ENCODE measurements at regions of chr12 and their contacts with region 1.

Region 1: DNA sequence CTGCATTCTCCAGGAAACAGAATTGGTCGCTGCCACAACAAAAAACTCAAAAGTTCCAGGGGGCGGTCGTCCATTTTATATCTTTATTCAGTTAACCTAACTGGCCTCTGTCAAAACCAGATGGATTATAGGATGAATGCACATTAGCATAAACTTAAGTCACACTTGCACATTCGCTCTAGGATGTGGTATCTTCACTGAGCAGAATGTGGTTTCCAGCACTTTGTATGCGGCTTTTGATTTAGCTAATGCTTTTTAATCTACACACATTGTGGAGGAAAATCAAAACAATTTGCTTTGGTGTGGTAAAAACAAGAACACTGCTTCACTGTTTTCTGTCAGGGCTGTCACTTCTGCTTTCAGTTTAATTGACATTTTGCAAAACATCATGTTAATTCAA is 4.5 kb downstream of the TAS2R50 start:
- DNase-seq: peak; percentile 74
- H3K4me3 Mint-ChIP-seq: no peak overlapping the region
- H3K27ac Mint-ChIP-seq: no peak overlapping the region
- H3K4me1 Mint-ChIP-seq: peaks cover 19% of the 10 kb centered on the region
- H3K27me3 Mint-ChIP-seq: peaks cover 9% of the 10 kb centered on the region

Region 2: GRCh38 chr12:10701131-10701681 is 281.0 kb before region 1 on chr12:
- CTCF ChIA-PET with region 1: no interaction called
- intact Hi-C with region 1: loop called (anchors 1 kb)
- DNase-seq: peak; percentile 65
- H3K4me3 Mint-ChIP-seq: no peak overlapping the region
- H3K27ac Mint-ChIP-seq: peak overlapping the region; percentile 76
- H3K4me1 Mint-ChIP-seq: peaks cover 16% of the 10 kb centered on the region
- H3K27me3 Mint-ChIP-seq: no peaks in the 10 kb centered on the region

Region 3: DNA sequence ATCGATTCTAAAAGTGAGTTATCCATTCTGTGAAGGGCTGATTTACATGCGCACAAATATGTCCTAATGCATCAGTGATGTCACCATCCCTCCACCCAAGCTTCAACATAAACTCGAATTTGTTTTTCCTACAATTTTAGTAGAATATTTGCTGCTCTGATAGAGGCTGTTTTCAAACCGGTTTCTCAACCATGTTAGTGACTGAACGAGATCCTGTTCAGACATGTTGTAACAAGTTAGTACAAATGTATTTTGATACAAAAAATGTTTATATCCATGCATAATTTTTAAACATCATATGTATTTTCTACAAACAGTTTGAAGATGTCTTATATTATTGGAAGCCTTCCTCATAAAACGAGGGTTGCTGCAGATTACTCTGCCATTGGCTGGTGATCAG is 425.9 kb after region 1 on chr12:
- CTCF ChIA-PET with region 1: no interaction called
- intact Hi-C with region 1: no loop called
- DNase-seq: no peak
- H3K4me3 Mint-ChIP-seq: no peak overlapping the region
- H3K27ac Mint-ChIP-seq: no peak overlapping the region
- H3K4me1 Mint-ChIP-seq: no peaks in the 10 kb centered on the region
- H3K27me3 Mint-ChIP-seq: no peaks in the 10 kb centered on the region

Measured in activated naive CD4-positive, alpha-beta T cell treated with anti-CD3 and anti-CD28 coated beads for 36 hours (primary cell).